A549 (cell line): ENCODE measurements at regions of chr20 and their contacts with region 1.

Region 1: DNA sequence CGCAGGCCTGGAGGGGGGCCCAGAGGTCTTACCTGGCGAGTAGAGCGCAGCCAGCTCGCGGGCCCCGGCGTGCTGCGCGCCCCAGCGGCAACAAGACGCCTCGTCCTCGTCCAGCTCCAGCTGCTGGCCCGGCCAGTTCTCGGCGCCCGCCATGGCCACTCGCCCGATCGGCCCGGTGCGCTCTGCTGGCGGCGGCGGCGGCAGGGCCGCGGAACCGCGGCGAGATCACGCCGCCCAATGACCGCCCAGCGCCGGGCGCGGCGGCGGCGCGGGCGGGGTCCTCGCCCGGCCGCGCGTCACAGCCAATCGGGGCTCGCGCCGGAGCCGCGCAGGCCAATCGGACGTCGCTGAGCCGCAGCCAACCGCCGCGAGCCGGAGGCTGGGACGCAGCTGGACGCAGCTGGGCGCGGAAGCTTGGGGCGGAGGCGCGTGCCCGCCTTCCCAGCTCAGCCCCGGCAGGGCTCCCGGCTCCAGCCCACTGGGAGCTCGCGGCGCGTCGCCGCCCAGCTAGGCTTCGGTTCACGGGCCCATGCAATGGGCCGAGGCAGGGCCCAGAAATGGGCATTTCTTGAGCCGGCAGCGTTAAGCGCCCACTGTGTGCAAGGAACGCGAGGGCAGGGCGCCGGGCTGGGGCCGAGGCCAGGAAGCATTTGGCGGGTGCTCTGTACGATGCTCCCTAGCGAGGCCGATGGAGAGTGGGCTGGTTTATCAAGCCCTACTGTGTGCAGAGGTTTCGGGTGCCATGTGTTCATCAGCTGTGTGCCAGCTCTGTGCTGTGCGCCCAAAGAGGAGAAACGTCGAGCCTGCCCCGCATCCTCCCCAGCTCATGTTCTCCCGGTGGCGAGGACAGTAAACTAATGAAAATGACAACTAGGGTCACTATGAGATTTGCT is at the start of gene PEDS1:
- DNase-seq: peak; percentile 87 to 98
- ATAC-seq: peak; percentile 95 to 97
- H3K4me3 ChIP-seq: peak within 1 kb of the TSS; percentile 100
- H3K27ac ChIP-seq: peak within 1 kb of the TSS; percentile 95 to 99
- H3K4me1 ChIP-seq: peaks cover 39% of the 10 kb centered on the region
- CTCF ChIP-seq: no peak
- EP300 ChIP-seq: no peak
- POLR2A ChIP-seq: peak; percentile 66
- RAD21 ChIP-seq: no peak
- polyA plus RNA-seq, gene PEDS1: 24.5 and 33.5 TPM in 2 replicates

Region 2: DNA sequence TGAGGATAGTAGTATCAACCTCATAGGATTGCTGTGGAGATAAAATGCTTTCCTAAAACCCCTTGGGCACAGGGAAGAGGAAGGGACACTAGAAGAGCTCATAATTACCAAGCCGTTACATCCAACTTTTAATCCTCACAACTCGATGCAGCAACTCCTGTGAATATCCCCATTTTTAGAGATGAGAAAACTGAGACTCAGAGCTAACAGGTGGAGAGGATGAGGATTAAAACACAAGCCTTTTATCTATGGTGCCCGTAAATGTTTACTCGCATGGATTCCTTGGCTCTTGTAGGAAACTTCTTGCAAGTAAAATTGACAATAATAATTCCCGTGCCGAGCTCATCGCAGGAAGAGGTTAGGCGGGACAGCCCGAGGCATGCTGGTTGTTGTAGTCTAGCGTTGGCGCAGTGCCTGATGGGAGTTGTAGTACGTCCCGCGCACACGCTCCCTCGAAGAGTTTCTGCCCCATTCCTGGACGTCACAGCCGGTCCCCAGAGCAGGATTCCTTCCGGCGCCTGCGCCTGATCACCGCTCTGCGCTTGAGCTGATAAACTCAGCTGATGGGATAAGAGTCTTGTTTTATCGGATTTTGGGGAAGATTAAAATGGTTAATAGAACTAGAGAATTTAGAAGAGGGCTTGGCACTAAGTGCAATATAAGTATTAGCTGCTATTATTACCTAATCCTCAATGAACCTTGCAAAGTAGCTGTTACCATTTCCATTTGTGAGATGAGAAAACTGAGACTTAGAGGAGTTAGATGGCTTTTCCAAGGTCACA is 37.9 kb before region 1 on chr20:
- CTCF ChIA-PET with region 1: interaction called, 161 read pairs
- POLR2A ChIA-PET with region 1: interaction called, 18 read pairs
- DNase-seq: peak; percentile 92 to 96
- ATAC-seq: peak; percentile 82 to 87
- H3K4me3 ChIP-seq: peak overlapping the region; percentile 54
- H3K27ac ChIP-seq: peak overlapping the region; percentile 69 to 84
- H3K4me1 ChIP-seq: peaks cover 31% of the 10 kb centered on the region
- CTCF ChIP-seq: no peak
- EP300 ChIP-seq: no peak
- POLR2A ChIP-seq: peak; percentile 61
- RAD21 ChIP-seq: no peak

Region 3: DNA sequence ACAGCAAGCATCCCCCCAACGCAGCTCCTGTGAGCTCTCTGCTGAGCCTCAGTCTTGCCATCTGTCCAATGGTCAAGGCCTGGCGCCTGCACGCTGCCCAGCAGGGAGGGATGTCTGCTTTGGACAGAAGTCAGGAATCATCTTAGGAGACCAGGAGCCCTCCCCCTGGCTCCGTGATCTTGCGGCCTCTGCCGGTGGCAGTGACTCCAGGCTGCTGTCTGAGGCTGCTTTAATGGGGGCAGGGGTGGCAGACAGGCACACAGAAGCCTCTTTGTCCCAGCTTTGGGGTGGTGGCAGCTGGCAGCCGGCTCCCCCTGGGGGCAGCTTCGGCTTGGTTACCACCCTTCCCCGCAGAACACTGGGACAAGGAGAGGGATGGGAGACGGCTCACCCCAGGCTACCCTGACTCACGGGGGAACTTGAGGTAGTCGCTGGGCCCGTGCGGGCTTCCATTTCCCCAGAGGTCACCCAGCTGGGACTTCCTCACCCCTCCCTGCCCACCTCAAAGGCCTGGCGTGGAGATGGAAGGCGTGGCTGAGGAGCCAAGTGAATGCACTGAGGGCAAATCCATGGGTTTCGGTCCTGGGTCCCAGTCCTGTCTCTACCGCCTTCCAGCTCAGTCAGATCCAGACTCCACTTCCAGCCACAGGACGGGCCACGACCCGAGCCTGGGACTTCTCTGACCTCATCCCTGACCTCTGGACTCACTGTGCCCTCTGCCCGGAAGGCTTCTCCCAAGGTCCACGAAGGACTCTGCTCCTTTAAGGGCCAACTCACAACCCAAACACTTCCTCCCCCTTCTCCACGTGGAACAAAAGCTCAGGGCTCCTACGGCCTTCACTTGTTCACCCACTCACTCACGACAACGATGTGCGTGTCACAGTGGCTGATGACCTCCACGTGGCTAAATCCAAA is 15.0 kb before region 1 on chr20:
- CTCF ChIA-PET with region 1: interaction called, 18 read pairs
- POLR2A ChIA-PET with region 1: interaction called, 48 read pairs
- DNase-seq: no peak
- ATAC-seq: peak; percentile 55 to 63
- H3K4me3 ChIP-seq: no peak overlapping the region
- H3K27ac ChIP-seq: peak overlapping the region; percentile 72 to 76
- H3K4me1 ChIP-seq: peaks cover 63% of the 10 kb centered on the region
- CTCF ChIP-seq: no peak
- EP300 ChIP-seq: no peak
- POLR2A ChIP-seq: no peak
- RAD21 ChIP-seq: no peak

Region 4: DNA sequence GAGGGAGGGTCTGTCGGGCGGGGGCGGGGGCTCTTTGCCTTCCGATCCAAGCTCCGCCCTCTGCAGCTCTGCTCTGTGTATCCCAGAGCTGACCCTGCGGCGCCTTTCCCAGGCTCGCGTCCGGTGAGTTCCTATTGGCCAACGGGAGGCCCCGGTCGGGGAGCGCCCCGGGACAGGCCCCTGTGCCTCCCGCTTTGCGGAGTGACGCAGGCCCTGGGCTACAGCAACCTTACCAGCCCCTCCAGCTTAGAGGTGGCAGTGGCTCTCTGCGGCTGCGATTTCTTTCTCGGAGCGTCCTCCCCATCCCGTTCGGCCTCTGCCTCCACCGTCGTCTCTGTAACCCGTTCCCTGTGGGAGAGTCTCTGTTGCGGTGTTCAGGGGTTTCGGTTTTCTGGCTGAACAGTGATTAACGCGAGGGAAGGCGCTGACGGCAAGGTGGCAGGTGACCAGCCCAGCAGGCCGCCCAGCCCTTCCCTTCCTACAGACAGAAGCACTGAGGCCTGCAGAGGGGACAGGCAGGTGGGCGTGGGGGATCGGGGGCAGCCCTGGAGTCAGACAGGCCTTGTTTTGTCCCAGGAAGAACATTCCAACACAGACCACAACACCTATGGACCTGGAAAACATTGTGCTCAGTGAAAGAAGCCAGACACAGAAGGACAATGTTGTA is 18.7 kb after region 1 on chr20:
- CTCF ChIA-PET with region 1: interaction called, 74 read pairs
- POLR2A ChIA-PET with region 1: interaction called, 4 read pairs
- DNase-seq: peak; percentile 91 to 95
- ATAC-seq: peak; percentile 92 to 97
- H3K4me3 ChIP-seq: peak overlapping the region; percentile 49
- H3K27ac ChIP-seq: peak overlapping the region; percentile 82 to 89
- H3K4me1 ChIP-seq: peaks cover 26% of the 10 kb centered on the region
- CTCF ChIP-seq: no peak
- EP300 ChIP-seq: no peak
- POLR2A ChIP-seq: peak; percentile 50
- RAD21 ChIP-seq: no peak

Region 5: GRCh38 chr20:50237349-50238085 is 83.8 kb after region 1 on chr20:
- CTCF ChIA-PET with region 1: no interaction called
- POLR2A ChIA-PET with region 1: no interaction called
- DNase-seq: no peak
- ATAC-seq: no peak
- H3K4me3 ChIP-seq: no peak overlapping the region
- H3K27ac ChIP-seq: no peak overlapping the region
- H3K4me1 ChIP-seq: no peaks in the 10 kb centered on the region
- CTCF ChIP-seq: no peak
- EP300 ChIP-seq: no peak
- POLR2A ChIP-seq: no peak
- RAD21 ChIP-seq: no peak

Region 6: GRCh38 chr20:50509935-50510705 is 356.4 kb after region 1 on chr20 and contains the start of gene PTPN1:
- CTCF ChIA-PET with region 1: no interaction called
- POLR2A ChIA-PET with region 1: interaction called, 11 read pairs
- DNase-seq: peak; percentile 89 to 98
- ATAC-seq: peak; percentile 97 to 98
- H3K4me3 ChIP-seq: peak within 1 kb of the TSS; percentile 100
- H3K27ac ChIP-seq: peak within 1 kb of the TSS; percentile 80 to 91
- H3K4me1 ChIP-seq: peaks cover 36% of the 10 kb centered on the region
- CTCF ChIP-seq: no peak
- EP300 ChIP-seq: no peak
- POLR2A ChIP-seq: peak; percentile 87
- RAD21 ChIP-seq: no peak
- polyA plus RNA-seq, gene PTPN1: 21.8 and 23.2 TPM in 2 replicates